K562 (cell line): ENCODE measurements at regions of chr7 and their contacts with region 1.

Region 1: GRCh38 chr7:55255496-55256435 is 109.4 kb upstream of the LANCL2 start:
- DNase-seq: peak; percentile 69 to 80 (median 76)
- ATAC-seq: peak; percentile 96
- H3K4me3 ChIP-seq: peak overlapping the region; percentile 47
- H3K27ac ChIP-seq: no peak overlapping the region
- H3K4me1 ChIP-seq: peaks cover 0 to 20% of the 10 kb centered on the region in 2 experiments; a peak in 3 of 5 replicates
- H3K27me3 ChIP-seq: peaks cover 0 to 26% of the 10 kb centered on the region in 2 experiments; a peak in 4 of 5 replicates
- CTCF ChIP-seq: peak; percentile 70 to 84 (median 71)
- EP300 ChIP-seq: no peak
- POLR2A ChIP-seq: no peak
- RAD21 ChIP-seq: peak; percentile 83 to 85

Region 2: GRCh38 chr7:54712820-54713219 is 542.9 kb before region 1 on chr7:
- CTCF ChIA-PET with region 1: no interaction called
- POLR2A ChIA-PET with region 1: no interaction called
- in situ Hi-C with region 1: no loop called
- intact Hi-C with region 1: loop called (anchors 10 kb)
- DNase-seq: no peak
- ATAC-seq: no peak
- H3K4me3 ChIP-seq: no peak overlapping the region
- H3K27ac ChIP-seq: no peak overlapping the region
- H3K4me1 ChIP-seq: no peaks in the 10 kb centered on the region
- H3K27me3 ChIP-seq: no peaks in the 10 kb centered on the region
- CTCF ChIP-seq: no peak
- EP300 ChIP-seq: no peak
- POLR2A ChIP-seq: no peak
- RAD21 ChIP-seq: no peak

Region 3: GRCh38 chr7:54788664-54789063 is 467.1 kb before region 1 on chr7:
- CTCF ChIA-PET with region 1: interaction called, 7 read pairs
- POLR2A ChIA-PET with region 1: no interaction called
- in situ Hi-C with region 1: loop called (anchors 5 kb)
- intact Hi-C with region 1: loop called (anchors 1 kb)
- DNase-seq: peak in 3 of 4 experiments; percentile 14 to 60 (median 40)
- ATAC-seq: peak; percentile 86
- H3K4me3 ChIP-seq: no peak overlapping the region
- H3K27ac ChIP-seq: no peak overlapping the region
- H3K4me1 ChIP-seq: no peaks in the 10 kb centered on the region
- H3K27me3 ChIP-seq: peaks cover 0 to 26% of the 10 kb centered on the region in 2 experiments; a peak in 2 of 5 replicates
- CTCF ChIP-seq: peak; percentile 49 to 61 (median 57)
- EP300 ChIP-seq: no peak
- POLR2A ChIP-seq: no peak
- RAD21 ChIP-seq: peak; percentile 47 to 68

Region 4: DNA sequence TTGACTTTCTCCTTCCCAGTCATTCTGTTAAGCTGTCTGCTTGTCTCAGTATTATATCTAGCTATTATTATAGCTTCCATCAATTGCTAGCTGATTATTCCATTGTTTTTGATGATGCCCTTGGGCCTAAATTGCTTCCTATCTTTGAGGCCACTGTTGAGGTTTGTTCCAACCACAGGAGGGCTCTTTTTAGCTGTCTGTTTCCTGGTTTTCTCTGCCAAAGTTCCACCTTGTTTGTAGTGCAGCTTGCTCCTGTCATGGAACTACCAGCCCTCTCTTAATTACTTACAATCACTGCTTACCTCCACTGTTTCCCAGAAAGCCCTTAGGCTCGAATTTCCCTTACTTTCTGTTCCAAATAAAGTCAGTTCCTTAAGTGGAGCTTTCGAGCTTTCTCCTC is 378.1 kb before region 1 on chr7:
- CTCF ChIA-PET with region 1: no interaction called
- POLR2A ChIA-PET with region 1: no interaction called
- in situ Hi-C with region 1: no loop called
- intact Hi-C with region 1: loop called (anchors 10 kb)
- DNase-seq: no peak
- ATAC-seq: no peak
- H3K4me3 ChIP-seq: no peak overlapping the region
- H3K27ac ChIP-seq: no peak overlapping the region
- H3K4me1 ChIP-seq: no peaks in the 10 kb centered on the region
- H3K27me3 ChIP-seq: no peaks in the 10 kb centered on the region
- CTCF ChIP-seq: no peak
- EP300 ChIP-seq: no peak
- POLR2A ChIP-seq: no peak
- RAD21 ChIP-seq: no peak

Region 5: DNA sequence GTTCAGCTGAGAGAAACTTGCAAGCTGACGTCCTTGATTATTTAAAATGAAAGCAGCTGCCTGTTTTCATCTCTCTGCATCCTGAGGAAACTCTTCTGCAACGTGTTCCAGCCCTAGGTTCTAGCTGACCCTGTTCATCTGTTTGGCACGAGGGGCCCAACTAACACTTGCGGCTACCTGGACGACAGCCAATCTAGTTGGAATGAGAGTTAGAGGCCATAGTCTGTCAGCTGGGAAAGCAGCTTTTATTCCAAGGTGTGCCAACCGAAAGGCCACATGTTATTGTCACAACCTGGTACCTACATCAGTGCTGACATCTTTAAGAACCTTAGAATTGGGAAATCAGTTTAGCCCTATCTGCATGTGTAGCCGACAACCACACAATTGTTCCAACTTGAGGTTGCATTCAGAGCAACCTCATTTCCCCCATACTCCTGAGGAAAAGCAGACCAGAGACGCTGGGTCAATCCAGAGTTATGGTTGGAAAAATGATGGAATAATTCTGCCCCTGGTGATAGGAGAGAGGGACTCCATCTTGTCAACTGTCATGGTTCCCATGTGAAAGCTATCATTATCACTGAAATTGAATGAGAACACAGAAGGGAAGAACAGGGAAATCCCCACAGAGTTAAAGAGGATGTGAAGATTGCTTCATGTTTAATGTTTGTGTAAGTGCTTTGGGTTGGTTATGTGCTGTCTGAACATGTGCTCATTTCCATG is 115.4 kb before region 1 on chr7:
- CTCF ChIA-PET with region 1: no interaction called
- POLR2A ChIA-PET with region 1: no interaction called
- in situ Hi-C with region 1: no loop called
- intact Hi-C with region 1: loop called (anchors 5 kb)
- DNase-seq: no peak
- ATAC-seq: no peak
- H3K4me3 ChIP-seq: no peak overlapping the region
- H3K27ac ChIP-seq: no peak overlapping the region
- H3K4me1 ChIP-seq: peaks cover 0 to 5% of the 10 kb centered on the region in 2 experiments; a peak in 1 of 5 replicates
- H3K27me3 ChIP-seq: peaks cover 0 to 22% of the 10 kb centered on the region in 2 experiments; a peak in 4 of 5 replicates
- CTCF ChIP-seq: no peak
- EP300 ChIP-seq: no peak
- POLR2A ChIP-seq: no peak
- RAD21 ChIP-seq: no peak